BJ (cell line): ENCODE measurements at regions of chr10 and their contacts with region 1.

Region 1: GRCh38 chr10:101141616-101142532 is 10.8 kb downstream of the TLX1 start:
- DNase-seq: peak; percentile 13
- H3K4me3 ChIP-seq: no peak overlapping the region
- H3K27me3 ChIP-seq: peaks cover 69% of the 10 kb centered on the region
- CTCF ChIP-seq: peak; percentile 99

Region 2: GRCh38 chr10:100598166-100598565 is 543.7 kb before region 1 on chr10:
- CTCF ChIA-PET with region 1: no interaction called
- POLR2A ChIA-PET with region 1: no interaction called
- DNase-seq: no peak
- H3K4me3 ChIP-seq: no peak overlapping the region
- H3K27me3 ChIP-seq: peaks cover 2% of the 10 kb centered on the region
- CTCF ChIP-seq: no peak

Region 3: GRCh38 chr10:100982951-100983830 is 158.7 kb before region 1 on chr10:
- CTCF ChIA-PET with region 1: no interaction called
- POLR2A ChIA-PET with region 1: no interaction called
- DNase-seq: no peak
- H3K4me3 ChIP-seq: no peak overlapping the region
- H3K27me3 ChIP-seq: no peaks in the 10 kb centered on the region
- CTCF ChIP-seq: no peak

Region 4: GRCh38 chr10:101042667-101043355 is 99.1 kb before region 1 on chr10:
- CTCF ChIA-PET with region 1: interaction called, 33 read pairs
- POLR2A ChIA-PET with region 1: interaction called, 4 read pairs
- DNase-seq: peak; percentile 92
- H3K4me3 ChIP-seq: peak overlapping the region; percentile 47
- H3K27me3 ChIP-seq: peaks cover 3% of the 10 kb centered on the region; the same call in 1 of the 2 replicates
- CTCF ChIP-seq: no peak

Region 5: DNA sequence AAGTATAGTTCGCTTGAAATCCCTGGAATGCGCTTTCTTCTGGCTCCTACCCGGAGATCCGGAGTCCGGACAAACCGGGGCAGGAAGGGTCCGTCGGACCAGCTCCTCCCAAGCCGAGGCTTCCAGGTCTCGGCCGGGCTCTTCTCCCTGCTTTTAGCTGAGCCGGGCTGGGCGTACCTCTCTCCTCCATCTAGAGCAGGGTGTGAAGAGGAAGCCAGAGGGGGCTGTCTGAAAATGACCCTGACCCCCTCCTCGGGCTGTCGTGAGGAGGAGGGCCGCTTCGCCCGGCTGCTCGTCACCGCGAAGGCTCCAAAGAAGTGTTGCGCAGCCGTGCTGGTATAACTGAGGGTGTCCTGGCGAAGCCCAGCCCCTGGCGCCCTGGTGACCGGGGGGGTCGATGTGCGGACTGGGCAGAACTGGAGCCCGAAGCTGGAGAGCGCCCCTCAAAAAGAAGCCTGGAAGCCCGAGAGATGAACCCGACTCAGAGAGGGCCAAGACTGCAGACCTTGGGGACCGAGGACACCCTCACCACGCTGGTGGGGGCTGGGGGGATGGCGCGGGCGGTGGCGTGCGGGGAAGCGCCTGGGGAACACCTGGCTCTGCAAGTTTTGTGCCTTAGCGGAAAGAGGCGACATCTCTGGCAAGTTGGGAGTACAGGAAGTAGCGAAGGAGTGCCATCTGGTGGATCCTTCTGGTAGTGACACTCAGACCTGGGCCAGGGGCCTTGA is 74.4 kb before region 1 on chr10:
- CTCF ChIA-PET with region 1: interaction called, 18 read pairs
- POLR2A ChIA-PET with region 1: no interaction called
- DNase-seq: no peak
- H3K4me3 ChIP-seq: peak overlapping the region; percentile 50
- H3K27me3 ChIP-seq: peaks cover 2% of the 10 kb centered on the region
- CTCF ChIP-seq: peak; percentile 86

Region 6: DNA sequence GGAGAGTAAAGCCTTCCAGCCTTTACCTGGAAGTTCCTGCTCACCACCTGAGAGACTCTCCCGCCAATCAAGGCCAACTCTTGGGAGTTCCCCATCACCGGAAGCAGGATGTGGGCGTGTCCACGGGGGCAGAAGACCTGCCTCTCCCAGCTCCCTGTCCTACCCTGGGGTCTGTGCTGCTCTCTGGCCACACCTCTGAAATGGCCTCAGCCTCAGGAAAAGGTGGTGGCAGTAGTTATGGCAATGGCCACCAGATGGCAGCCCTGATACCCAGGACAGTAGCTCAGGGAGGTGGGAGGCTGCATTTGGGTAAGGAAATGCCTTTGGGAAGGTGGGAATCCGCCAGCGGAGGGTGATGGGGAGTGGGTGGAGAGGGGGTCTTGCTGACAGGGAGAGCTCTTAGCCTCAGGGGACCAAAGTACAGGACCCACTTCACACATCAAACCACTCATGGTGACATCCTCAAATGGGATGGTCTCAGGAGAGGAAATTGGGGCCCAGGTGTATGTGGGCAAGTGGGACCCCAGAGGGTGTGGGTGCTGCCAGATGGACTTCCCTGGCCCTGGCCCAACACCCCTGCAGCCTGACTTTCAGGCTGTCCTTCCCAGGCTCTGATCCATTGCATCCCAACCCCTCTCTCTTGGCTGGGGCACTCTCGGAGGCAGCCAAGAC is 46.2 kb before region 1 on chr10:
- CTCF ChIA-PET with region 1: interaction called, 312 read pairs
- POLR2A ChIA-PET with region 1: interaction called, 3 read pairs
- DNase-seq: no peak
- H3K4me3 ChIP-seq: no peak overlapping the region
- H3K27me3 ChIP-seq: peaks cover 26% of the 10 kb centered on the region
- CTCF ChIP-seq: peak; percentile 89

Region 7: GRCh38 chr10:101130984-101131961 is 10.6 kb before region 1 on chr10 and contains the start of gene TLX1:
- CTCF ChIA-PET with region 1: interaction called, 54 read pairs
- POLR2A ChIA-PET with region 1: no interaction called
- DNase-seq: no peak
- H3K4me3 ChIP-seq: no peak within 1 kb of the TSS
- H3K27me3 ChIP-seq: peaks cover 69% of the 10 kb centered on the region
- CTCF ChIP-seq: no peak
- polyA plus RNA-seq, gene TLX1: not detected in 2 replicates